Natural killer cell (primary cell): ENCODE measurements at regions of chr21 and their contacts with region 1.

Region 1: DNA sequence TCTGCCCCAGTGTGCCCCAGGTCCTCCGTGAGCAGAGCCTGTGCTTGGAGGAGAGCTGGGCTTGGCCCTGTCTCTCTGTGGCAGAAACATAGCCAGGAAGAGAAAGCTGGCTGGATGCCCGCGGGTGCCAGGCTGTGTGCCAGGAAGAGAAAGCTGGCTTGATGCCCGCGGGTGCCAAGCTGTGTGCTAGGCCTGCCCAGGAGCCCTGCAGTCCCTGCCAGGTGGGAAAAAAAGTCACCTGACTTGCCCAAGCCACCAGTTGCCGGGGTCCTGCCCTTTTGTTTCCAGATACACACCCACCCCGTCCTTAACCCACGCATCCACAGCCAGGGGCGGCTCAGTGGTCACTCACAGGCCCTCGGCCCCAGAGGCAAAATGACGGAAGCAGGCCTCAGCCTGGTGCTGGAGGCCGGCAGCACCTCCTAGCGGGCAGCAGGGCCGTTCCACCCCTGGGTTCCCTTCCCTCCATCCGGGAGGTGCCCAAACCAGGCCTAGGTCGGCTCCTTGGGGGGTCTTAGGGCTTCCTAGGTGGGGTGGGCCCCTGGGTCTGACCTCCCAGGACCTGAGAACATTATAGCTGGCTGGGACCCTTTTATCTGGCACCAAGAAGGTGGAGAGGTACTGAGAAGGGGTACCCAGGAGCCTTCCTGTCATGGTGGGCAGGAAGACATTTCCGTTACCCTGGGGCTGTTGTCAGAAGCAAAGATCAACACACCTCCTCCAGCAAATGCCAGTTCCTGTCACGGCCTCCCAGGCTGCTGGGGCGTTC is 9.1 kb downstream of the ITGB2 start:
- DNase-seq: peak; percentile 63 to 81
- ATAC-seq: peak; percentile 54 to 74 (median 62)
- H3K4me3 ChIP-seq: peak overlapping the region; percentile 26
- H3K4me3 Mint-ChIP-seq: peak overlapping the region; percentile 85
- H3K27ac ChIP-seq: peak overlapping the region; percentile 83
- H3K27ac Mint-ChIP-seq: peak overlapping the region; percentile 85 to 98
- H3K4me1 ChIP-seq: peaks cover 95% of the 10 kb centered on the region
- H3K4me1 Mint-ChIP-seq: peaks cover 63 to 78% of the 10 kb centered on the region in 2 donors
- H3K27me3 ChIP-seq: no peaks in the 10 kb centered on the region
- H3K27me3 Mint-ChIP-seq: no peaks in the 10 kb centered on the region
- CTCF ChIP-seq: peak; percentile 78

Region 2: DNA sequence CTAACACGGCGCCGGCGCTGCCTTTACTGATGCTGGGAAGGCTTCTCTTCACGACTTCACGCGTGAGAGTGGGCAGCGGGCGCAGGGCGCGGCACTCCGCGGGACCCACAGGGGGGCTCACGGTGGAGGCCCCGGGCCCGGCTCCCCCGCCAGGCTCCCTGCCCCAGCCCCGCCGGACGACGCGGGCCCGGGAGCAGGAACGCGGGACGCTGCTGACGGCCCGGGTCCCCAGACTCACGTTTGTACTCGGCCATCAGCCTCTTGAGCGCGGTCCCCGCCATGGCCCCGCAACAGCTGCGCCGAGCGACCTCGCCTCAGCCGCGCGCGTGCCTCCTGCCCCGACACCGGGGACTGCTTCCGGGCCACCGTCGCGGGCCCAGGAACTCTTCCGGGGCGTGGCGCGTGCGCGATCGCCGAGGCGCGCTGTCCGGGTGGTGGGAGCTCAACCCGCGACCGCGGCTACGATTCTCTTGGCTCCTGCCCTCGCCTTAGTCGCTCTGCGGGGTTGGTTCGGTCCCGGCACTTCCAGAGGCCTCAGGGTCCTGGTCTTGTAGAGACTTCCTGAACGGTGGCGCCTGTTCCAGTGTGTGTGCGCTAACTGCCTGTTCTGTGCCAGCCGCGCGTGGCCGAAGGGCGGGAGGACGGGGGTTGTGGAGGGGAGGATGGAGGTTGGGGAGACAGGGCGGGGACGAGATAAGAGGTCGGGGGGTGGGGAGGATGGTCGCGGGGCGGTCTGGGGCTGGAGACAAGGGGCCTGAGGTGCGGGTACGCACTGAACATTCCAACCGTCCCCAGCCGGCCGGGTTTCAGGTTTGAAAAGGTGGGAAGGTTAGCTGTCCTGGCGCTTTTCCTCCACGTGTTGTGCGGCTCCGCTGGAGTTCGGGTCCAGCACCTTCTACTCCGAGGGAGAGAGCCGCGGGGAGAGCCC is 109.8 kb before region 1 on chr21 and contains the start of gene UBE2G2:
- intact Hi-C with region 1: loop called (anchors 5 kb)
- DNase-seq: peak; percentile 89 to 93
- ATAC-seq: peak; percentile 94 to 95 (median 94)
- H3K4me3 ChIP-seq: peak within 1 kb of the TSS; percentile 90
- H3K4me3 Mint-ChIP-seq: peak within 1 kb of the TSS; percentile 94
- H3K27ac ChIP-seq: peak within 1 kb of the TSS; percentile 64
- H3K27ac Mint-ChIP-seq: peak within 1 kb of the TSS; percentile 79 to 85
- H3K4me1 ChIP-seq: peaks cover 20% of the 10 kb centered on the region
- H3K4me1 Mint-ChIP-seq: peaks cover 35 to 41% of the 10 kb centered on the region in 2 donors
- H3K27me3 ChIP-seq: no peaks in the 10 kb centered on the region
- H3K27me3 Mint-ChIP-seq: no peaks in the 10 kb centered on the region
- CTCF ChIP-seq: no peak
- total RNA-seq, gene UBE2G2: 89.1 to 109 (median 107) TPM

Region 3: DNA sequence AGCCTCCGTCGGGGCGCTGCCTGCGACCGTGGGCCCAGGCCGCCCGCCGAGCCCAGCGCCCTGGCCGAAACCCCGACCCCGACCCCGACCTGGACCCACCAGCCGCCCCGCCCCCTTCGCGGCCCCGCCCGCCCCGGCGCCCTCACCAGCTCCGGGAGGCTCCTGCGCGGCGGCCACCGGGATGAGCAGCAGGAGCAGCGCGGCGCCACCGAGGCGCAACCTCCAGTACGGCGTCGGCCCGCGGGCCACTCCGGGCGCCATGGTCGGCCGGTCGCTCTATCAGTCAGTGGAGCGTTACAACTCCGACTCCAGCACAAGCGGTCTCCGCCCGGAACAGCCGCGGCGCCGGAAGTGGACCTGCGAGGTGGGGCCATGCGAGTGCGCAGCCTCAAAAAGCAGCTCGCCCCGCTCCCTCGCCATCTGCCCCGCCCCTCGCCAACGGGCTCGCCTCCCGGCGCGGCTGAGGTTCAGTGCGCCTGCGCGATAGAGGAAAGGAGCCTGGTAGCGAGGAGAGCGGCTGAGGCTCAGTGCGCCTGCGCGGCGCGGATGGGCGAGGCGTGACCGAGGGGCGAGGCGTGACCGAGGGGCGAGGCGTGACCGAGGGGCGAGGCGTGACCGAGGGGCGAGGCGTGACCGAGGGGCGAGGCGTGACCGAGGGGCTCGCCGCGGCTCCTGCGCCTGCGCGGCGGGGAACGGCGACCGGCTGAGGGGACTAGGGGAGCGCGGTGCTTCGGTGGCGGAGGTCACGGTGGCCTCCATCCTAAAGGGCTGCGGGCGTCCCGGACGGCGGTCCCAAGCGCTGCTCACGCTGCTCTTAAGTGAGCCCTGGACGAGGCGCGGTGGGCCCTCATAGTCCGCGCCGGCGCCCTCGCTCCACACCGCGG is 38.0 kb before region 1 on chr21 and contains the start of gene PTTG1IP:
- intact Hi-C with region 1: loop called (anchors 2 kb)
- DNase-seq: peak; percentile 98 to 100
- ATAC-seq: peak; percentile 82 to 91 (median 83)
- H3K4me3 ChIP-seq: peak within 1 kb of the TSS; percentile 52
- H3K4me3 Mint-ChIP-seq: peak within 1 kb of the TSS; percentile 94
- H3K27ac ChIP-seq: peak within 1 kb of the TSS; percentile 85
- H3K27ac Mint-ChIP-seq: peak within 1 kb of the TSS; percentile 92 to 93
- H3K4me1 ChIP-seq: peaks cover 54% of the 10 kb centered on the region
- H3K4me1 Mint-ChIP-seq: peaks cover 47 to 50% of the 10 kb centered on the region in 2 donors
- H3K27me3 ChIP-seq: no peaks in the 10 kb centered on the region
- H3K27me3 Mint-ChIP-seq: no peaks in the 10 kb centered on the region
- CTCF ChIP-seq: no peak
- total RNA-seq, gene PTTG1IP: 96.8 to 144 (median 126) TPM

Region 4: GRCh38 chr21:44892536-44893277 is 18.9 kb before region 1 on chr21:
- intact Hi-C with region 1: loop called (anchors 1 kb)
- DNase-seq: peak; percentile 77 to 89
- ATAC-seq: peak; percentile 79 to 92 (median 80)
- H3K4me3 ChIP-seq: no peak overlapping the region
- H3K4me3 Mint-ChIP-seq: no peak overlapping the region
- H3K27ac ChIP-seq: no peak overlapping the region
- H3K27ac Mint-ChIP-seq: peak overlapping the region; percentile 58 to 76
- H3K4me1 ChIP-seq: peaks cover 41% of the 10 kb centered on the region
- H3K4me1 Mint-ChIP-seq: peaks cover 17 to 22% of the 10 kb centered on the region in 2 donors
- H3K27me3 ChIP-seq: no peaks in the 10 kb centered on the region
- H3K27me3 Mint-ChIP-seq: no peaks in the 10 kb centered on the region
- CTCF ChIP-seq: peak; percentile 86

Region 5: GRCh38 chr21:45161038-45161945 is 249.7 kb after region 1 on chr21:
- intact Hi-C with region 1: no loop called
- DNase-seq: no peak
- ATAC-seq: no peak
- H3K4me3 ChIP-seq: no peak overlapping the region
- H3K4me3 Mint-ChIP-seq: no peak overlapping the region
- H3K27ac ChIP-seq: no peak overlapping the region
- H3K27ac Mint-ChIP-seq: no peak overlapping the region
- H3K4me1 ChIP-seq: no peaks in the 10 kb centered on the region
- H3K4me1 Mint-ChIP-seq: no peaks in the 10 kb centered on the region
- H3K27me3 ChIP-seq: no peaks in the 10 kb centered on the region
- H3K27me3 Mint-ChIP-seq: no peaks in the 10 kb centered on the region
- CTCF ChIP-seq: no peak